Activated CD8-positive, alpha-beta T cell treated with anti-CD3 and anti-CD28 coated beads for 36 hours (primary cell): ENCODE measurements at regions of chr7 and their contacts with region 1.

Region 1: GRCh38 chr7:47937065-47937683 is 11.1 kb downstream of the PKD1L1 start:
- DNase-seq: peak; percentile 29
- ATAC-seq: peak; percentile 70
- H3K4me3 Mint-ChIP-seq: no peak overlapping the region
- H3K27ac Mint-ChIP-seq: no peak overlapping the region
- H3K4me1 Mint-ChIP-seq: peaks cover 5% of the 10 kb centered on the region
- H3K27me3 Mint-ChIP-seq: no peaks in the 10 kb centered on the region
- CTCF ChIP-seq: no peak

Region 2: DNA sequence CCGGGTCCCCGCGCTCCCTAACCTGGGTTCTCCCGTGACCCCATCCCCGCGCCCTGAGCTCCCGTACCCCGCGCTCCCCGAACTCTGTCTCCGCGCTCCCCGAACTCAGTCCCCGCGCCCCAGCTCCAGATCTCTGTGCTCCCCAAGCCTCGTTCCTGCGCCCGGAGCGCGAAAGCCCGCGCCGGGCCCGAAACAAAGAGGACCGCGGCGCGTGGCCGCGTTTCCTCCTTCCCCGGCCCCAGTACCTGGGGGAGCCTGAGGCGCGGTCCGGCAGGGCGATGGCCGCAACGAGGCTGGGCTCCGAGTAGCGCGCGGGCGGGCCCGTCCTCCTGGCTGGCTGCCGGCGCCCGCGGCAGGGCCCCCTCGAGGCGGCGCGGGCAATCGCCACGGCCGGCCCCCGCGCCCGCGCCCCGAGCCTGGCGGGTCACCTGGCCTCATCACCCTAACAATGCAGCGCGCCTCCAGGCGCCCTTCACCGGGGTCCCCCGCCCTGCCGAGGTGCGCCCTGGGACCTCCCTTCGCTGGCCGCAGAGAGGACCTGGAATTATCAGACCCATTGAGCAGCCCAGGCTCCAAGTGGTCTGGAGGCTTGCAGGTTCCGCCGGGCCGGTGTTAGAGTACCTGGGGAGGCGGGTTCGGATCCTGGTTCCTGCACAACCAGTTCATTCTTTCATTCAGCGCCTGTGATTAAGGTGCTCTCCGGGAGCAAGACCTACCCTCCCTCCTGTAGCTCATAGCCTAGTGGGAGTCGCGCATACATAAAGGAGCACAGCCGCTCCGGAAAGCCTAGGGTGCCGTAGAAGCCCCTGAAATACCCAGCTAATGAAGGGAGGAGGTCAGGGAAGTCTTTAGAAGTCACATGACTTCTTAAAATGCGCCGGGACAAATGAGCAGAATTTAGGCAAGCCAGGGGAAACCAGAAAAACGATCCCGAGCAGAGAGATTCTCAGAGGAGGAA is 355.1 kb before region 1 on chr7 and contains the start of gene TNS3:
- CTCF ChIA-PET with region 1: no interaction called
- POLR2A ChIA-PET with region 1: no interaction called
- intact Hi-C with region 1: no loop called
- DNase-seq: no peak
- ATAC-seq: no peak
- H3K4me3 Mint-ChIP-seq: no peak within 1 kb of the TSS
- H3K27ac Mint-ChIP-seq: no peak within 1 kb of the TSS
- H3K4me1 Mint-ChIP-seq: peaks cover 5% of the 10 kb centered on the region
- H3K27me3 Mint-ChIP-seq: peaks cover 23% of the 10 kb centered on the region
- CTCF ChIP-seq: no peak
- total RNA-seq, gene TNS3: 0.04 to 0.16 TPM

Region 3: DNA sequence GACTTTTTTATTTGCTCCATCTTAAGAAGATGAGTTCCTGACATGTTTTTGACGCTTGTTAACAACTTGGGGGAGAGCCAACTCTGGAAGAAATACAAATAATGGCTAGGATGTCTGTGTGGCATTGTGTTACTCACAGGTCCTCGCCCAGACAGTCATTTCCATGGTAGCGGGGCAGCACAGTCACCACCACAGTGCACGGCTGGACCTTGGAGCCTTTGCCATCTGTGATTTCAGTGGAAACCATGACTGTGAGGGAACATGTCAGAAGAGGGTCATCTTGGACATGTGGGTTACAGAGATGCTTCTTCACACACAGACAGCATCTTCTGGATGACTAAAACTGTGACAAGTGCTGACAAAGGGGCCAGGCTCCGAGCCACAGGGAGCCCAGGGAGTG is 63.4 kb before region 1 on chr7:
- CTCF ChIA-PET with region 1: no interaction called
- POLR2A ChIA-PET with region 1: no interaction called
- intact Hi-C with region 1: loop called (anchors 10 kb)
- DNase-seq: no peak
- ATAC-seq: peak; percentile 49
- H3K4me3 Mint-ChIP-seq: no peak overlapping the region
- H3K27ac Mint-ChIP-seq: no peak overlapping the region
- H3K4me1 Mint-ChIP-seq: peaks cover 28% of the 10 kb centered on the region
- H3K27me3 Mint-ChIP-seq: no peaks in the 10 kb centered on the region
- CTCF ChIP-seq: no peak

Region 4: DNA sequence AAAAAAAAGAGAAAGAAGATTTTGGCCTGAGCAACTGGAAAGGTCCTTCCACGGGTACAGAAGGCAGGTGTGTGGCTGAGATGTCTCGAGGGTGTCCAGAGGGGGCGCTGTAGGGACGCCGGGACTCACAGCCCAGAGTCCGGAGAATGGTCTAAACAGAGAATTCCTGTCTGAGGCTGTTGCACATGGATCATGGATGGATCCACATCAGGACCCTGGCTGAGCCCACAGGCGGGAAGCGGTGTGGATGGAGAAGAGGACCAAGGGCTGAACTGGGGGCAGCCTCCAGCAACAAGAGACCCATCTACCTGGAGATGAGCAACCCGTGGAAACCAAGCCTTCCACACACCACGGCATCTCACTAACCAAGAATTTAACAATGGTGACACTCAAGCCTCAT is 43.9 kb before region 1 on chr7:
- CTCF ChIA-PET with region 1: no interaction called
- POLR2A ChIA-PET with region 1: no interaction called
- intact Hi-C with region 1: no loop called
- DNase-seq: peak; percentile 11
- ATAC-seq: no peak
- H3K4me3 Mint-ChIP-seq: no peak overlapping the region
- H3K27ac Mint-ChIP-seq: no peak overlapping the region
- H3K4me1 Mint-ChIP-seq: no peaks in the 10 kb centered on the region
- H3K27me3 Mint-ChIP-seq: no peaks in the 10 kb centered on the region
- CTCF ChIP-seq: peak; percentile 34